Activated naive CD4-positive, alpha-beta T cell treated with anti-CD3 and anti-CD28 coated beads for 36 hours (primary cell): ENCODE measurements at regions of chr19 and their contacts with region 1.

Region 1: DNA sequence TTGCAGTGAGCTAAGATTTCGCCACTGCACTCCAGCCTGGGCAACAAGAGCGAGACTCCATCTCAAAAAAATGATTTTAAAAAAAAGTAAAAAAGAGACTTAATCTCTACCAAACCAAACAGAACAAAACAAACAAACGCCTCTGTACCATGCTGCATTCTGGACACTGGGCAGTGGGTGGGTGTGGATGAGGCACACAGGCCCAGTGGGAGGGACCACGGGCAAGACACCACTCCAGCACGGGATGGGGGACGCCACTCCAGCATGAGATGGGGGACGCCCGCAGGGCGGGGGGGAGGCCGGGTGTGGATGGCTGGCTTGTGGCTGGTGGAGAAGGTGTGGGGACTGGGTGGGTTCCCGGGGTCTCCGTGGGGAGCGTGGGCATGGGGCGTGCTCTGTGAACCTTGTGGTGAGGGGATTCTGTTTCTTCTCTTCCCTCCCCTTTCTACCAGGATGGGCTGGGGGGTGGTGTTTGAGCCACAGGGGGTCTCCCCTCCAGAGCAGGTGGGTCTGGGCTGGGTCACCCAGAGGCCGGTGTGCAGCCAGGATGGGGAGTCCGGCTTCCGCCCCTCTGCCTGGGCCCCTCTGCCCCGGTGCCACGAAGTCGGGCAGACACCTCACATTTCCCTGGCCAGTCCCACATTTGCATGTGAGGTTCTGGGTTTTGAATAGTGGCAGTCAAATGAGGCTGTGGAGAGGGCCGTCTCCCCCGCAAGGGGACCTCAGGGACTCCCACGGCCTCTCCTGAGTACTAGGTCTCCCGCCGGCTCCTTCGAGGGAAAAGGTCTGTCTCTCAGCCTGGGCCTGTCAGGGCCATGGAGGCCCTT is 23.9 kb upstream of the MATK start:
- DNase-seq: peak; percentile 62
- H3K4me3 Mint-ChIP-seq: no peak overlapping the region
- H3K27ac Mint-ChIP-seq: no peak overlapping the region
- H3K4me1 Mint-ChIP-seq: peaks cover 38% of the 10 kb centered on the region
- H3K27me3 Mint-ChIP-seq: no peaks in the 10 kb centered on the region

Region 2: GRCh38 chr19:3505598-3506383 is 304.3 kb before region 1 on chr19 and contains the start of gene FZR1:
- CTCF ChIA-PET with region 1: no interaction called
- intact Hi-C with region 1: loop called (anchors 5 kb)
- DNase-seq: peak; percentile 99
- H3K4me3 Mint-ChIP-seq: peak within 1 kb of the TSS; percentile 90
- H3K27ac Mint-ChIP-seq: peak within 1 kb of the TSS; percentile 92
- H3K4me1 Mint-ChIP-seq: peaks cover 39% of the 10 kb centered on the region
- H3K27me3 Mint-ChIP-seq: no peaks in the 10 kb centered on the region
- total RNA-seq, gene FZR1: 40.3 to 46.3 TPM

Region 3: DNA sequence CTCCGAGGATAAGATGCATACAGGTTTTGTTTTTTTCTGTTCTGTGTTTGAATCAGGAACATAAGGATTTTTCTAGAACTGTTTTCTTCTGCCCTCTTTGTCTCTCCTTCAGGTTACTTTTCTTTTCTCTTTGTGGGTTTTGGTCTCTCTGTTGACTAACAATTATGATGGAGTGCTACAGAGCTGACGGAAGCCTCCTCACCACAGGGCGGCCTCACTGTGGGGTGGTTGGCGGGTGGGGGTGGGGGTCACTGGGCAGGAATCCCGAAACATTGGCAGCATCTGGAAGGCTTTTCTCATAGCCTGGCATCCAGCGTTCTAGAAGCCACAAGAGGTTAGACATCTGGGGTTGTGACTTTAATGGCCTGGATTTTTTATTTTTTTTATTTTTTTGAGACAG is 12.0 kb before region 1 on chr19:
- CTCF ChIA-PET with region 1: interaction called, 3 read pairs
- intact Hi-C with region 1: loop called (anchors 2 kb)
- DNase-seq: no peak
- H3K4me3 Mint-ChIP-seq: no peak overlapping the region
- H3K27ac Mint-ChIP-seq: no peak overlapping the region
- H3K4me1 Mint-ChIP-seq: peaks cover 20% of the 10 kb centered on the region
- H3K27me3 Mint-ChIP-seq: no peaks in the 10 kb centered on the region

Region 4: DNA sequence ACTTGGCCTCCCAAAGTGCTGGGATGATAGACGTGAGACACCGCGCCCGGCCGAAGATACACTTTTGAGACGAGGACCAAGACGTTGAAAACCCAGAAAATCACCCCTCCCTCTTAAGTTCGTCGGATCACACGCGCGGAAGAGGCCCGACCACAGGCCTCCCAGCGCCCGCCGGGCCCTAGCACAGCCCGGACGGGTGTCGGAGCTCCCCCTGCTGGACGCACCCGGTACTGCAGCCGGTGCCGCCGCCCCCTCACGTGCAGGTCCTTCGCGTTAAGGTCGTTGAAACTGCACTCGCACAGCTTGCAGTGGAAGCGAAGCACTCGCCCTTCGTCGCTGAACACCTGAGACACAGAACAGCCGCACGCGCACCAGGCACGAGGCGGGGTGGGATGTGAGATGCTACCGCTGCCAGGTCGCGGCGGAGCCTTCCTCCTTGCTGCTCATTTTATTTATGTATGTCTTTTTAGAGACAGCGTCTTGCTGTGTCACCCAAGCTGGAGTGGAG is 11.8 kb after region 1 on chr19:
- CTCF ChIA-PET with region 1: interaction called, 10 read pairs
- intact Hi-C with region 1: no loop called
- DNase-seq: peak; percentile 91
- H3K4me3 Mint-ChIP-seq: no peak overlapping the region
- H3K27ac Mint-ChIP-seq: no peak overlapping the region
- H3K4me1 Mint-ChIP-seq: peaks cover 30% of the 10 kb centered on the region
- H3K27me3 Mint-ChIP-seq: no peaks in the 10 kb centered on the region

Region 5: DNA sequence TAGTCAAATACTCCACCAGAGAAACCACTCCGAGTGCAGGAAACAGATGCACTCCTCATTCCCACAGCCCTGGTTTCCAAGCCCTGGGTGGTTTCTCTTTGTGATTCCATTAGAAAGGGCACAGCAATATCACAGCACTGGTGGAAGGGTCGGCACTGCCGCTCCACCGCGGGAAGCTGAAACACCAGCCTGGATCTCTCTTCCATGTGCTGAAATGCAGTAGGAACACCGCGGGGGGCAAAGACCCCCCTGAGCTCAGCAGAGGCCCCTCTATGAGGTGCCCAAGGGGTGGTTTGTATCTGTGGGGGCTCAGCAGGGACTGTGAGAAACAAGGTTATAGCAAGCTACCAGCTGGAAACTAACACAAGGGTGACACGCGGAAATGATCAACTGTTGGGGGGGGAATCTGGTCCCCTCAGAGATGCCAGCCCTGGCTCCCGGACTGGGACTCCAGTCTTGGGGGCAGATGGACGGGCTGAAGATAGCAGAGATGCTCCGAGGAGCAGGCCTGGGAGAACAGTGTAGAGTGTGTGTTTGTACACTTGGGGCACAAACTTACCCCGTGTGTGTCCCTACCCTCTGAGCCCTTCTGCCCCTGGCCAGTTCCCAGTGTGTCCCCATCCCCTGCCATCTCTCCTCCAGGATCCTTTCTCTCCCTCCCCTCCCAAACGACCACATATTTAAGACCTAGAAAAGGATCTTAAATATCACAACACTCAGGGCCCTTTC is 57.0 kb after region 1 on chr19:
- CTCF ChIA-PET with region 1: no interaction called
- intact Hi-C with region 1: no loop called
- DNase-seq: no peak
- H3K4me3 Mint-ChIP-seq: no peak overlapping the region
- H3K27ac Mint-ChIP-seq: no peak overlapping the region
- H3K4me1 Mint-ChIP-seq: peaks cover 7% of the 10 kb centered on the region
- H3K27me3 Mint-ChIP-seq: peaks cover 32% of the 10 kb centered on the region